ENCODE measurements at regions of chr1 and their contacts with region 1.

Region 1: DNA sequence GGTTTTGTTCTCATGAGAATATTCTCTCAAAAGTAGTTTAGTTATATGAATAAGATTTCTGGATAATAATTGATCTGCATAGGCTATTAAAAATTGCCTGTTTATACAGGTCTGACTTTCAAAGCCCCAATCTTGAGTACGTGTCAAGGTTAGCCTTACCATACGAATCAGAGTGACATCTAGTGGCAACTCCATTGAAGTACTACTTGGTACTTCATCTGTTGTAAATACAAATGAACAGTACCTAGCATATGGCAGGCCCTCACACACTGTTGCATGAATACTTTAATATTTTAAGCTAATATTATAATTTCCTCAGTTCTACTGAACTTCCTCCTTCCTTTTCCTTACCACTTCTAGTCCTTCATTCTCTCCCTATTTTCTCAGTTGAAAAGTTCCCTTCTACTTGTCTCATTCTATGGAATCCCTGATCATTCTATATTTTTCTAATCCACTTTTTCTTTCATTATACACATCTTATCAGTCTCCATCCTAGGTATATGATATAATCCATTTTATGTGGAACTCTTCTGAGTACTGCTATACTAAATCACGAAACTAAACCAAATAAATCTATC is 101.2 kb downstream of the AKT3 start:
- DNase-seq: peak; percentile 64 to 82 (median 72)
- H3K4me3 ChIP-seq: no peak overlapping the region
- H3K4me3 Mint-ChIP-seq: no peak overlapping the region
- H3K27ac ChIP-seq: no peak overlapping the region
- H3K27ac Mint-ChIP-seq: no peak overlapping the region
- H3K4me1 ChIP-seq: peaks cover 0 to 11% of the 10 kb centered on the region in 2 donors
- H3K4me1 Mint-ChIP-seq: peaks cover 15% of the 10 kb centered on the region
- H3K27me3 ChIP-seq: no peaks in the 10 kb centered on the region
- H3K27me3 Mint-ChIP-seq: no peaks in the 10 kb centered on the region
- CTCF ChIP-seq: peak; percentile 81

Region 2: DNA sequence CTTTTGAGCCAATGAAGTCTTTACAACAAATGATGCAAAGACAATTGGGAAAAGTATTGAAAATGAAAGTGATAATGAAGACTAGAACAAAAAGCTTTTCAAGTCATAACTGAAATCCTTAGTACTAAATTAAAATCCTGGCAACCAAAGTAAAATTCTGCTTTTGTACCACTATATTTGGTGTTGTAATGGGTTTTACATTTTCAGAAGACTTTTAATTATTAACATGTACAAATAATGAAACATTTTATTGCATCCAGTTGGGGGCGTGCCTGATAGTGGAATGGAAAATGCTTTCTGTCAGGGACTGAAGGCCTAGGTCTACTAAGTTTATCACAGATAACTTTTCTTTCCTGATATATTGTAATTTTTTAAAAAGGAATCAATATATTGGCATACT is 403.6 kb before region 1 on chr1:
- intact Hi-C with region 1: loop called in 1 of 2 experiments (anchors 5 kb)
- DNase-seq: no peak
- H3K4me3 ChIP-seq: no peak overlapping the region
- H3K4me3 Mint-ChIP-seq: no peak overlapping the region
- H3K27ac ChIP-seq: no peak overlapping the region
- H3K27ac Mint-ChIP-seq: no peak overlapping the region
- H3K4me1 ChIP-seq: no peaks in the 10 kb centered on the region
- H3K4me1 Mint-ChIP-seq: no peaks in the 10 kb centered on the region
- H3K27me3 ChIP-seq: no peaks in the 10 kb centered on the region
- H3K27me3 Mint-ChIP-seq: peaks cover 0 to 1% (median 0%) of the 10 kb centered on the region in 3 donors
- CTCF ChIP-seq: no peak

Region 3: GRCh38 chr1:243471754-243472745 is 276.7 kb before region 1 on chr1:
- intact Hi-C with region 1: loop called in 1 of 2 experiments (anchors 10 kb)
- DNase-seq: peak; percentile 62 to 86 (median 80)
- H3K4me3 ChIP-seq: peak overlapping the region in 1 of 3 experiments; percentile 57
- H3K4me3 Mint-ChIP-seq: peak overlapping the region in 1 of 2 donors; percentile 72
- H3K27ac ChIP-seq: peak overlapping the region; percentile 72 to 80
- H3K27ac Mint-ChIP-seq: peak overlapping the region; percentile 85 to 93 (median 92)
- H3K4me1 ChIP-seq: peaks cover 42 to 53% of the 10 kb centered on the region in 2 donors
- H3K4me1 Mint-ChIP-seq: peaks cover 52% of the 10 kb centered on the region
- H3K27me3 ChIP-seq: no peaks in the 10 kb centered on the region
- H3K27me3 Mint-ChIP-seq: peaks cover 0 to 10% (median 0%) of the 10 kb centered on the region in 3 donors
- CTCF ChIP-seq: no peak

Region 4: GRCh38 chr1:243701872-243702271 is 46.9 kb before region 1 on chr1:
- intact Hi-C with region 1: no loop called
- DNase-seq: no peak
- H3K4me3 ChIP-seq: no peak overlapping the region
- H3K4me3 Mint-ChIP-seq: no peak overlapping the region
- H3K27ac ChIP-seq: no peak overlapping the region
- H3K27ac Mint-ChIP-seq: no peak overlapping the region
- H3K4me1 ChIP-seq: no peaks in the 10 kb centered on the region
- H3K4me1 Mint-ChIP-seq: no peaks in the 10 kb centered on the region
- H3K27me3 ChIP-seq: no peaks in the 10 kb centered on the region
- H3K27me3 Mint-ChIP-seq: no peaks in the 10 kb centered on the region
- CTCF ChIP-seq: no peak

Region 5: GRCh38 chr1:243713470-243714186 is 35.2 kb before region 1 on chr1:
- intact Hi-C with region 1: loop called (anchors 2 to 5 kb)
- DNase-seq: no peak
- H3K4me3 ChIP-seq: peak overlapping the region; percentile 33 to 59 (median 50)
- H3K4me3 Mint-ChIP-seq: peak overlapping the region; percentile 70 to 86
- H3K27ac ChIP-seq: peak overlapping the region in 1 of 2 donors; percentile 72
- H3K27ac Mint-ChIP-seq: peak overlapping the region in 6 of 7 donors; percentile 67 to 93 (median 85)
- H3K4me1 ChIP-seq: peaks cover 10 to 55% of the 10 kb centered on the region in 2 donors
- H3K4me1 Mint-ChIP-seq: peaks cover 49% of the 10 kb centered on the region
- H3K27me3 ChIP-seq: no peaks in the 10 kb centered on the region
- H3K27me3 Mint-ChIP-seq: peaks cover 0 to 2% (median 0%) of the 10 kb centered on the region in 3 donors
- CTCF ChIP-seq: no peak

Region 6: GRCh38 chr1:243917177-243917862 is 168.5 kb after region 1 on chr1:
- intact Hi-C with region 1: no loop called
- DNase-seq: no peak
- H3K4me3 ChIP-seq: peak overlapping the region; percentile 45 to 77 (median 46)
- H3K4me3 Mint-ChIP-seq: peak overlapping the region; percentile 89 to 97
- H3K27ac ChIP-seq: no peak overlapping the region
- H3K27ac Mint-ChIP-seq: peak overlapping the region in 3 of 7 donors; percentile 3 to 62 (median 39)
- H3K4me1 ChIP-seq: peaks cover 17 to 21% of the 10 kb centered on the region in 2 donors
- H3K4me1 Mint-ChIP-seq: peaks cover 23% of the 10 kb centered on the region
- H3K27me3 ChIP-seq: peaks cover 30 to 39% of the 10 kb centered on the region in 2 donors
- H3K27me3 Mint-ChIP-seq: peaks cover 39 to 45% (median 43%) of the 10 kb centered on the region in 3 donors
- CTCF ChIP-seq: no peak

Region 7: DNA sequence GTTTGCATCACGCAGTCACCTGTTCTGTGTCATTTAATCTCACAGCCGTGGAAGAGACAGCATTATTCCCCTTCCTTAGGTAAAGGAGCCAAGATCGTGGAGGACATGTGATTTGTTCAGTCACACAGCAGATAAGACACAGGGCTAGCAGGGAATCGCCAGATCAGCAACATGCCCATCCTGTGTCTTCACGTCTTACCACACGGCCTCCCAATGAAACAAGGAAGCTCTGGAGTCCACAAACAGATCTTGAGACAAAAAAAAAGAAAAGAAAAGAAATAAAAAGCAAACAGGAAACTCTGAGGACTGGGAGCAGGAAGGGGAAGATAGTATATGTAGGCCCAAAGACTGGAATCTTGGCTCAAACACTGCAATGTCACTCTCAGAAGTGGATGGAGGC is 547.7 kb after region 1 on chr1:
- intact Hi-C with region 1: loop called in 1 of 2 experiments (anchors 10 kb)
- DNase-seq: peak in 2 of 3 donors; percentile 12 to 13
- H3K4me3 ChIP-seq: peak overlapping the region in 1 of 3 experiments; percentile 8
- H3K4me3 Mint-ChIP-seq: no peak overlapping the region
- H3K27ac ChIP-seq: peak overlapping the region in 1 of 2 donors; percentile 71
- H3K27ac Mint-ChIP-seq: peak overlapping the region; percentile 43 to 89 (median 73)
- H3K4me1 ChIP-seq: peaks cover 34 to 44% of the 10 kb centered on the region in 2 donors
- H3K4me1 Mint-ChIP-seq: peaks cover 54% of the 10 kb centered on the region
- H3K27me3 ChIP-seq: no peaks in the 10 kb centered on the region
- H3K27me3 Mint-ChIP-seq: no peaks in the 10 kb centered on the region
- CTCF ChIP-seq: no peak